ENCODE measurements at regions of chr14 and their contacts with region 1.

Region 1: DNA sequence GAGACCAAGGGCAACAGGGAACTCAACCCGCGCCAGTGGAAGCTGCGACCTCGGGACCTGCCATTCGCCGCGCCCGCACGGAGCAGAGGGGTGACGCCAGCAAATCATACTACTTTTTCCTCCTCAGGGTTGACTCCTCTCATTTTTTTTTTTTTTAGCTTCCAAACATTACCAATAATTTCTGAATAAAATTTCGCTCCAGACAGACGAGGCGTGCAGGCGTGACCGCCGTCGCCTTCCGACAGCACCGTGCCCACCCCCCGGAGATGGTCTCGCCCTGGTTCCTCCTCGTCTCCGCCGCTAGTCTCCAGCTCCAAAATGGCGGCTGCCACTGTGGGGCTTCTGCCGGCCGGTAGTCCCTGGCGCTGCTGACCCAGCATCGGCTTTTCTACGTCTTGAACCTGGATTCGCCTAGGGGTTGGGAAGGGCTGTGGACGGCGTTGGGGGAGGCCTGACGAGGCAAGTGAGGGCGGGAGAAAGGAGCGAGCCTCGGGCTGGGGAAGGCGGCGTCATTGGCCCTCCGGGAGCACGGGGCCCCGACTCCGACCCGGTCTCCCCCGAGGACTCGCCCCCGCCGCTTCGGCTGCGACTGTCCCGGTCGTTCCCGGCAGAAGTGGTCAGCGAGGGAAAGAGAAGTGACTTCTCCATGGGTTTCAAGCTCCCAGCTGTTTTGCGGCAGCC is at the starts of genes CPSF2 and NDUFB1:
- DNase-seq: peak; percentile 82
- H3K4me3 Mint-ChIP-seq: peak within 1 kb of the TSS; percentile 100
- H3K27ac Mint-ChIP-seq: peak within 1 kb of the TSS; percentile 100
- H3K4me1 Mint-ChIP-seq: peaks cover 30% of the 10 kb centered on the region
- H3K27me3 Mint-ChIP-seq: no peaks in the 10 kb centered on the region
- total RNA-seq, gene CPSF2: 101 and 104 TPM in 2 replicates
- total RNA-seq, gene NDUFB1: 77.3 and 78.6 TPM in 2 replicates

Region 2: DNA sequence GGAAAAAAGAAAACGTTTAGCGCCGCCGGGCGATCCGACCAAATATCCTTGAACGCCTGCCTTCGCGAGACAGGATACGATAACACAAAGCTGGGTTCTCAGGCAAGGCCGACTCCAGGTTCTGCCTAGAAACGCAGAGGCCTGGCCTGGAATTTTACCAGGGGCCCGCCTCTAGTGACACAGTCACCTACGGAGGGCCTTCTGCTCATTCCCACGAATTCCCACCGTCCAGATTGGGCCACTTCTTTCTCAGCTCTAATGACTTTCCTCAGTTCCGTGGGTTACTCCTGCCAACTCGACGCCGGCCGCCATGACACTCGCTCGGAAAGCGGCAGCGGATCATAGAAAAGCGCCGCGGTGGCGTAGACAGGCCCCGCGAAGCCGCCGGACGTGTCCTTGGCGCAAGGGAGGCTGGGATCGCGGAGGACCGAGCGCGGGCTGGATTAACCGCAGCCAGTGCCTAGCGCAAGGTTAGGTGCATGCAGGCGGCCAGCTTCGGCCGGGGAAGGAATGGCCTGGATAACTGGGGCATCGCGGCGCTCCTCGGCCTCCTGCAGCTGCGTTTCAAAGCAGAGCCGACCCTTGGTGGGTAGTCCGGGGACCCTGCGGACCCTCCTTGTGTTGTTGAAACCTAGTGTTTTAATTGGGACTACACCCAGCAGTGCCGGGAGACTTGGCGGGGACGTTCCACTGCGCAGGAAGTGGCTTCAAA is 81.9 kb before region 1 on chr14 and contains the start of gene TRIP11:
- intact Hi-C with region 1: loop called (anchors 5 kb)
- DNase-seq: peak; percentile 93
- H3K4me3 Mint-ChIP-seq: peak within 1 kb of the TSS; percentile 97
- H3K27ac Mint-ChIP-seq: peak within 1 kb of the TSS; percentile 99
- H3K4me1 Mint-ChIP-seq: peaks cover 27% of the 10 kb centered on the region
- H3K27me3 Mint-ChIP-seq: no peaks in the 10 kb centered on the region
- total RNA-seq, gene TRIP11: 37.0 and 41.7 TPM in 2 replicates

Region 3: DNA sequence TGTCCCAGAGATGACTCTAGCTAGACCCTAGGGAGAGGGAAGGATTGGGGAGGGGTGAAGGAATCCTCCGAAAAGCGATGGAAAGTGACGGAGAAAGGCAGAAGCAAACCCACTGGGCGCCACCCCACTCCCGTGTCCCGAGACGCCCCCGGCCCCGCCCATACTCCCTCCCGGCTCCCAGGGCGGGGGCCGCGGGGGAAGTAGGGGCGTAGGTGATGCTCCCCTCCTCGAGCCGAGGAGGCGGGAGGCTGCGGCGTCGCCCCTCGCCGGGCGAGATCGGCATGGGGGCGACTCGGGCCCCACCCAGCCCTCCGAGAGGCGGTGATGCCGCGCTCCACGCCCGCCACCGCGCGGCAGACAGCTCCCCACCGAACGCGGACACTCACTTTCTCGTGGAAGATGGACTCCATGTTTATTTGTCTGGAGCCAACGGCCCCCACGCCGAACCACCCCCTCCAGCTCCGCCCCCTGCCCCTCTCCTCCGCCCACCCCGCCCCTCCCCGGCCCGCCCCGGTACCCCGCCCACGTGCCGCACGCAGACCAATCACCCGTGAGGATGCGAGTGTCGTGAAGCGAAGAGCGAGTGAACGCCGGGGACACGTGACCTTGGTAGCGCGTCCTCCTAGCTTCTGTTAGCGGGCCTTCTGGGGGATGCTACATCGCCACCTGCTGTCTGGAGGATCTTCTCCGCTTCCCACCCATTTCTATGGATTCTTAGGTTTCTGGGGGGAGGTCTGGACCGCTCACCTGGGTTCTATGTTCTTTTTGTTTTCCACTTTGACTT is 15.5 kb before region 1 on chr14 and contains the start of gene ATXN3:
- intact Hi-C with region 1: loop called (anchors 1 kb)
- DNase-seq: peak; percentile 94
- H3K4me3 Mint-ChIP-seq: peak within 1 kb of the TSS; percentile 99
- H3K27ac Mint-ChIP-seq: peak within 1 kb of the TSS; percentile 96
- H3K4me1 Mint-ChIP-seq: peaks cover 29% of the 10 kb centered on the region
- H3K27me3 Mint-ChIP-seq: no peaks in the 10 kb centered on the region
- total RNA-seq, gene ATXN3: 31.1 and 35.9 TPM in 2 replicates

Region 4: DNA sequence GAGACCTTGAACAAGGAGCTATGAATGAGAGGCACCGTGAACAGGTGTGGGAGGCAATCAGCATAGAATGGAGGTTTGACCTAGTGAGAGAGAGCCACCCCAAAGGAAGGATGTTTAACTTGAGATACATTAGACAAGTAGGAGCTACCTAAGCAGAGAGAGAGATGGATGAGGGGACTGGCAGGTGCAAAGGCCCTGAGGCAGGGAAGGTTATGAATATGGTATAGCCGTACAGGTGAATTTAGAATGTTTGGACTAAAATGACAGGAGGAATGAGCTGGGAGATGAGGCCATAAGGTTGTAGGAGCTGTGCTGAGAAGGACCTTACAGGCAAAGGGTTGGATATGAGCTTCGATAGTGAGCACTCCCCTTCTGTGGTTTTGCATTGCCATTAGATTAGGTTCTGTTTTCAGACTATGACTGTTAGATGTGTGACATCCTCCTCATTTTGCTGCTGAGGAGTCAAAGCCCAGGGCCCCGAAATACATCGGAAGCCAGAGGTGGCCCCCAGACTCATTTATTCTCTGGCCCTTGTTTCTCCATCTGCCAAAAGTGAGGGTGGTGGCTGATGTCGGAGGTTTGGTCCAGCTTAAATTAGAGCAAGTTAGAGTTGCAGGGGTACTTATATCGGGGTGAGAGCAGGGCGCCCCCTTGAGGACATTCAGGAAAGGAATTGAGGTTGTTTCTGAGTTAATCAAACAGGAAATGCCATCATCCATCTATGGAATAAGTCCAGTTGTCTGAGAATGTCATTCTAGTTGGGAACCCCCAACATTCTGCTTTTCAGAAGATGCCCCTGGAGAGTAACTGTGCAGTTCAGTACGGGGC is 230.6 kb after region 1 on chr14:
- intact Hi-C with region 1: loop called (anchors 10 kb)
- DNase-seq: peak; percentile 17
- H3K4me3 Mint-ChIP-seq: no peak overlapping the region
- H3K27ac Mint-ChIP-seq: no peak overlapping the region
- H3K4me1 Mint-ChIP-seq: no peaks in the 10 kb centered on the region
- H3K27me3 Mint-ChIP-seq: peaks cover 21% of the 10 kb centered on the region

Measured in activated T-helper 2 cell treated with anti-CD3 and anti-CD28 coated beads, Interferon-gamma antibody, Interleukin-2, Interleukin-4, amounts not matched to agents 10 μg/mL and 5 μg/mL and 100 μg/mL, durations not matched to agents 14 hours and 24 hours and 36 hours (primary cell).